A673 (cell line): ENCODE measurements at regions of chr3 and their contacts with region 1.

Region 1: GRCh38 chr3:130093741-130094391 is 12.2 kb downstream of the ALG1L2 start:
- DNase-seq: no peak
- H3K4me3 ChIP-seq: no peak overlapping the region
- H3K27ac ChIP-seq: no peak overlapping the region
- H3K4me1 ChIP-seq: peaks cover 8% of the 10 kb centered on the region
- H3K27me3 ChIP-seq: no peaks in the 10 kb centered on the region
- CTCF ChIP-seq: no peak

Region 2: DNA sequence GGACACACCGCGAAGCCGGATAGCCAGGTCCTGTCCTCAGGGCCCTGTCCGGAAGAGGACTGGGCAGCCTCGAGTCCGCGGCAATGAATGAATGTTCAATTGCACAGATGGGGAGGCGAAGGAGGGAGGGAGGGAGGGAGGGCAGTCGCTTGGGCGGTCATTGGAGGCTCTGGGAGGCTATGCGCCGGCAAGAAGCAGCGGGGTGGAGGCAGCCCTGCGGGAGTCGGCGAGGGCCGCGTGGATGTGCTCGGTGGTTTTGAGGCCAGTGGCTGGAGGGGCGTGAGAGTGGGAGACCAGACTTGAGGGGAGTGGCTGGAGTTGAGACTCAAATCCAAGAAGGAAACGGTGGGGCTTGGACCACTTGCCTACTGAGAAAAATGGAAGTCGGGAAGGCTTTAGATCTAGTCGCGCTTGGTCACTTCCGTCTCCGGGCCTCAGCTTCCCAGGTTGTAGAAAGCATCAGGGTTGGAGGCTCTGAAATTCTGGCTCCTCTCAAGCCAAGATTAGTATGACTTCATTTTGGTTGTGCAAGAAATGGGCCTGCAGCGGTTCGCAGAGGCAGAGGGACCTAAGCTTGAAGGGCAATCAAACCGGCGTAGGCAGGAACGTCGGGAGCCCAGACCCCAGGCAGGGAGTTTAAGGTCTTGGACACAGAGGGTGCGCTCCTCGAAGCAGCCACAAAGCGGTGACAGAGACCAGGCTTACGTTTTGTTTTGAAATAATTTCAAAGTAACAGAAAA is 466.3 kb before region 1 on chr3:
- CTCF ChIA-PET with region 1: no interaction called
- POLR2A ChIA-PET with region 1: no interaction called
- intact Hi-C with region 1: loop called (anchors 5 kb)
- DNase-seq: peak; percentile 91
- H3K4me3 ChIP-seq: peak overlapping the region; percentile 52
- H3K27ac ChIP-seq: peak overlapping the region; percentile 75
- H3K4me1 ChIP-seq: peaks cover 20% of the 10 kb centered on the region
- H3K27me3 ChIP-seq: no peaks in the 10 kb centered on the region
- CTCF ChIP-seq: peak; percentile 84

Region 3: GRCh38 chr3:129942296-129942695 is 151.6 kb before region 1 on chr3:
- CTCF ChIA-PET with region 1: interaction called, 14 read pairs
- POLR2A ChIA-PET with region 1: no interaction called
- intact Hi-C with region 1: loop called (anchors 2 kb)
- DNase-seq: peak; percentile 65
- H3K4me3 ChIP-seq: no peak overlapping the region
- H3K27ac ChIP-seq: no peak overlapping the region
- H3K4me1 ChIP-seq: peaks cover 6% of the 10 kb centered on the region
- H3K27me3 ChIP-seq: no peaks in the 10 kb centered on the region
- CTCF ChIP-seq: peak; percentile 79

Region 4: DNA sequence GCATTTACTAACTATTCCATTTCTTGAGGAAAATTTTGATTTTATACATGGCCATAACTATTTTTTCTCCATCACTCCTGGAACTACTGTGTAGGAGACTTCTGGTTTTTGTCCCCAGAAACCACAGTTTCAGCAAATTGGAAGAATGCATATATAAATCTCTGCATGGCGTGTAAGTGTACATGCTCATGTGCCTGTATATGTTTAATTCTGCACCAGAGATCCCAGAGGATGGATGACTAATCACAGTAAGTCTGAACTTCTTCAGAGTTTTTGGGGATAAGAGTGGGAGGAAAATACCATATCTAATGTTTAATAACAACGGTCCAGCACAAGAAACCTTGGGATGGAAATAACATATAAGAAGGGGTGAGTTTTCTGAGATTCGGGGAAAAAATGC is 412.2 kb after region 1 on chr3:
- CTCF ChIA-PET with region 1: no interaction called
- POLR2A ChIA-PET with region 1: no interaction called
- intact Hi-C with region 1: no loop called
- DNase-seq: no peak
- H3K4me3 ChIP-seq: no peak overlapping the region
- H3K27ac ChIP-seq: no peak overlapping the region
- H3K4me1 ChIP-seq: no peaks in the 10 kb centered on the region
- H3K27me3 ChIP-seq: peaks cover 36% of the 10 kb centered on the region
- CTCF ChIP-seq: no peak